Transverse colon (tissue), 4 donors: ENCODE measurements at regions of chr12 and their contacts with region 1.

Region 1: GRCh38 chr12:69359531-69360347 is at the start of gene YEATS4:
- DNase-seq: peak; percentile 88
- H3K4me3 ChIP-seq: peak within 1 kb of the TSS; percentile 73 to 93 (median 87)
- H3K27ac ChIP-seq: peak within 1 kb of the TSS; percentile 97 to 99 (median 98)
- H3K4me1 ChIP-seq: peaks cover 4 to 25% (median 14%) of the 10 kb centered on the region in 4 donors
- H3K27me3 ChIP-seq: no peaks in the 10 kb centered on the region
- CTCF ChIP-seq: peak in 2 of 5 experiments; percentile 6 to 20
- EP300 ChIP-seq: no peak
- POLR2A ChIP-seq: peak; percentile 78
- total RNA-seq, gene YEATS4: 4.4 to 32.2 (median 7.9) TPM

Region 2: DNA sequence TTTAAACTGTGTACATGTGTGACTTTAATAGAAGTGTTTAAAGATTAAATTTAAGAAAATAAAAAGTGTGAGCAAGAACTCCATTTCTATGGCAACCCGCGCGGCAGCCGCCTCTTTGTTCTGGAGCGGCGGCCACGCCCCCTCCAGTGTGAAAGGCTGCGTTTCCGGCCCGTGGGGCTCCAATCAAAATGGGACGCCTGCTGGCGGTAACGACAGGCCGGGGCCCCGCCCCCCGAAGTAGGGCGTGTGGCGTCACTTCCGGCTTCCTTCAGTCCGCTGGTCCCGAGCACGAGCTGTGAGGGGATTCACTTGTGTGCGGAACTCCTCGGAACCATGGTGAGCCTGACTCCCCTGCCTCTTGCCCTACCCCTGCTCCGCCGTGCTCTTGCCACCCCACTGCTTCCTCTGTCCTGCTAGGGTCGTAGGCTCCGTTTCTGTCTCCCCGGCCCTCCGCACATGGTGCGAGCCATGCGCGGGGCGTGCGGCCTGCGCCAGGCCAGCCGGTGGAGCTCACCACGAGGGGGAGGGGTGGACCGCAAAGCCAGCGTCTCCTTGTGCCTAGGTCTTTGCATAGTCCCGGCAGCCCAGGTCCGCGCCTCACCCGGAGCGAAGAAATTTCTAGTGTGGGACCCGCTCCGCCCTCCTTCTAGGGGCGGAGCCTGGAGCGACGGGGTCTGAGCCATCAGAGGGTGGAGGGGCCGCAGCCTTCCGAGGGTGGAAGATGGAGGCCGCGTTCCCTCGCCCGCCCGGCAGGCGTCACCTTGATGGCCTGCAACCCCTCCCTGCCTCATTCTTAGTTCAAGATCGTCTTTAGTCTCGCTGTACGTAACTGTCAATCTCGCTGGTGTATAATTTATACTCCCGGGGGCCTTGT is 225.7 kb after region 1 on chr12 and contains the start of gene CCT2:
- in situ Hi-C with region 1: no loop called
- intact Hi-C with region 1: loop called (anchors 10 kb)
- DNase-seq: peak; percentile 98
- H3K4me3 ChIP-seq: peak within 1 kb of the TSS; percentile 79 to 93 (median 91)
- H3K27ac ChIP-seq: peak within 1 kb of the TSS; percentile 90 to 98 (median 92)
- H3K4me1 ChIP-seq: peaks cover 0 to 16% (median 10%) of the 10 kb centered on the region in 4 donors
- H3K27me3 ChIP-seq: no peaks in the 10 kb centered on the region
- CTCF ChIP-seq: peak; percentile 30 to 50 (median 39)
- EP300 ChIP-seq: no peak
- POLR2A ChIP-seq: peak; percentile 81
- total RNA-seq, gene CCT2: 25.4 to 92.7 (median 46.9) TPM

Region 3: DNA sequence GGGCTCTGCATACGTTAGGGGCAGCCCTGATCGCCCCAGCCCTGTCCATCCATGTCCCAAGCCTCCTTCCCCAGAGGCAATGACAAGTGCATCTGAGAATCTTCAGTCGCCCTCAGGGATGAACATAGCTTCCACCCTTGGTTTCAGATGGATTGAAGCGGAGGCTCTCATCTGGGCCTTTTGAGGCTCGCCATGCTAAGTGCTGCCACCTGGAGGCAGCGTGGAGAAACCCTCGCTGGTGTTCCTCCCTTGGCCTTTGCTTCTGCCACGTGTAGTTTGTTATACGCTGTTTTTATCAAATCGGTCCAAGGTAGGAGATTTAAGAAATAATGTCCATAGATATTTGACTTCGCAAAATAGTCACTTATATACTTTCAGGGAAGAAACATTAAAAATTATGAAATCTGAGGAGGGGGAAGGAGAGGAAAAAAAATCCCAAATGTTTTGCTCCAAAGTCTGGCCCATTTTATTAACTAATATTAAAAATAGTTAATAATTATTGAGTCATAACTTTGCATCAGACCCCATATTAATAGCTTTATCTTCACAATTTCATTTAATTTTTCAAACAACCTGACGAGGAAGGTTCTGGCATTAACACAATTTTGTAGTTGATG is 279.8 kb after region 1 on chr12:
- in situ Hi-C with region 1: loop called in 1 of 4 experiments (anchors 10 kb)
- intact Hi-C with region 1: loop called (anchors 5 kb)
- DNase-seq: peak; percentile 66
- H3K4me3 ChIP-seq: no peak overlapping the region
- H3K27ac ChIP-seq: no peak overlapping the region
- H3K4me1 ChIP-seq: no peaks in the 10 kb centered on the region
- H3K27me3 ChIP-seq: no peaks in the 10 kb centered on the region
- CTCF ChIP-seq: peak; percentile 66 to 87 (median 84)
- EP300 ChIP-seq: no peak
- POLR2A ChIP-seq: no peak

Region 4: GRCh38 chr12:69649529-69649928 is 289.8 kb after region 1 on chr12:
- in situ Hi-C with region 1: no loop called
- intact Hi-C with region 1: no loop called
- DNase-seq: no peak
- H3K4me3 ChIP-seq: no peak overlapping the region
- H3K27ac ChIP-seq: no peak overlapping the region
- H3K4me1 ChIP-seq: no peaks in the 10 kb centered on the region
- H3K27me3 ChIP-seq: no peaks in the 10 kb centered on the region
- CTCF ChIP-seq: no peak
- EP300 ChIP-seq: no peak
- POLR2A ChIP-seq: no peak